Ovary (tissue), 10 donors: ENCODE measurements at regions of chr15 and their contacts with region 1.

Region 1: GRCh38 chr15:70752193-70752635 is 11.1 kb downstream of the UACA start:
- DNase-seq: no peak
- H3K4me3 ChIP-seq: no peak overlapping the region
- H3K27ac ChIP-seq: no peak overlapping the region
- H3K4me1 ChIP-seq: peaks cover 8% of the 10 kb centered on the region
- H3K27me3 ChIP-seq: no peaks in the 10 kb centered on the region
- CTCF ChIP-seq: no peak
- EP300 ChIP-seq: no peak
- POLR2A ChIP-seq: no peak

Region 2: DNA sequence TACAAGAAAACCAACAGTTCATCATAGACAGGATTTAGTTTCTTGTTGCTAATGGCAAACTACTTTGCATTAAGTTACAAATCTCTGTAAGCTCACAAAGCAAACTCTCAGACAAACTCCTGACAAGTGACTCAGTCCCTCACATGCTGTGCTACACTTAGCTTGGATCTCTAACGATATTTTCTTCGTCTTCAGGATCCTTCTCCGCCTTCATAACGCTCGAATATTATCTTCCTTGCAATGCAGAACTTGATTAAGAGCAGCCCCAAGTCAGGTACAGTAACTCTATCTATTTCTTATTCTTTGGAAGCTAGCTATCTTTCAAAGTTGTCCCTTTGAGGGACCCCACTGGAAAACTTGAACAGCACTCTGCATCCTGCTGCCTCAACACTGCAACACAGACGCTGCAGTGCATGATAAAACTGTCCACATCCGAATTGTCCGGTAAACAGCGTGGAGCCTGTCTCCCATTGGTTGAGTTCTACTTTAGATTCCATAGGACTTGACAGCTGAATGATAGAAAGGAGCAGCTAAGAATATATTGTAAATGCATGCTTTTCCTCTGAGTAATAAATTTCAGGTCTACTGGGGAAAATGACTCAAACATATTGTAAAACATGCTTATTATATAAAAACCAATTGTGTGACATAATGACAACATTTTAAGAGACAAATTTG is 50.2 kb before region 1 on chr15:
- intact Hi-C with region 1: no loop called
- DNase-seq: no peak
- H3K4me3 ChIP-seq: no peak overlapping the region
- H3K27ac ChIP-seq: peak overlapping the region in 1 of 2 donors; percentile 59
- H3K4me1 ChIP-seq: peaks cover 13% of the 10 kb centered on the region
- H3K27me3 ChIP-seq: no peaks in the 10 kb centered on the region
- CTCF ChIP-seq: no peak
- EP300 ChIP-seq: no peak
- POLR2A ChIP-seq: no peak

Region 3: DNA sequence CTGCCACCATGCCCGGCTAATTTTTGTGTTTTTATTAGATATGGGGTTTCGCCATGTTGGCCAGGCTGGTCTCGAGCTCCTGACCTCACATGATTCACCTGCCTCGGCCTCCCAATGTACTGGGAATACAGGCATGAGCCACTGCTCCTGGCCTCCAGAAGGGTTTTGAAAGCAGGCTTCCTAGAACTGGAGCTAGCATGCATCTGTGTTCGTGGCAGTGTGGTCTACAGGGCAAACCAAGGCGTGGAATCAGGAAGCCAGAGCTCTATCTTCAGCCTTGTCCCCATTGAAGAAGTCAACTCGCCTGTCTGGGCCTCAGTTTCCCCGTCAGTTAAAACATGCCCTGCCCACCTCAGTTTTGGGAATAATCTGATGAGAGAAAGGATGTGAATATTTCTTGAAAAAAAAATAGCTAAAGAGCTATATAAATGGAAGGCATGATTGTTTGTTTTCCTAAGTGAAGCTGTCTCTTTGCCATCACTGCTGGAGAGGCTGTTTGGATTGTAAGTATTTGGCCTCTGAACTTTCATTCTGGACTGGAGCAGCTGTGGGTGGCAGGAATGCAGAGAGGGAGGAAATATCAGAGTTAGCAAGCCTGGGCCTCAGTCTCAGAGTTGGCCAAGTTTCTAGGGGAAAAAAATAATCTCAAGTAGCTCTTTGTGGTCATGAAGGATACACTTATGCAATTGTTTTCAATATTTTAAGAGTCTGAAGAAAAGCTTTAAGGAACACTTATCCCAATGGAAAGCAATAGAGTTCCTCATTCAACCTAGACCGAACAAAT is 47.6 kb after region 1 on chr15:
- intact Hi-C with region 1: loop called in 1 of 4 experiments (anchors 10 kb)
- DNase-seq: peak in 3 of 5 donors; percentile 45 to 54 (median 49)
- H3K4me3 ChIP-seq: no peak overlapping the region
- H3K27ac ChIP-seq: peak overlapping the region in 1 of 2 donors; percentile 56
- H3K4me1 ChIP-seq: peaks cover 15% of the 10 kb centered on the region
- H3K27me3 ChIP-seq: no peaks in the 10 kb centered on the region
- CTCF ChIP-seq: no peak
- EP300 ChIP-seq: no peak
- POLR2A ChIP-seq: no peak